CD8-positive, alpha-beta memory T cell (primary cell): ENCODE measurements at regions of chr17 and their contacts with region 1.

Region 1: GRCh38 chr17:49567871-49568694 is 7.6 kb upstream of the NXPH3 start:
- DNase-seq: peak; percentile 69 to 84 (median 75)
- H3K4me3 ChIP-seq: peak overlapping the region; percentile 59
- H3K4me3 Mint-ChIP-seq: peak overlapping the region; percentile 48 to 79 (median 66)
- H3K27ac ChIP-seq: no peak overlapping the region
- H3K27ac Mint-ChIP-seq: peak overlapping the region in 4 of 8 donors; percentile 11 to 50 (median 32)
- H3K4me1 ChIP-seq: peaks cover 16% of the 10 kb centered on the region
- H3K4me1 Mint-ChIP-seq: peaks cover 13 to 24% (median 17%) of the 10 kb centered on the region in 3 donors
- H3K27me3 ChIP-seq: no peaks in the 10 kb centered on the region
- H3K27me3 Mint-ChIP-seq: peaks cover 18 to 23% of the 10 kb centered on the region in 2 donors

Region 2: GRCh38 chr17:49580055-49580721 is 12.1 kb after region 1 on chr17:
- CTCF ChIA-PET with region 1: interaction called, 14 read pairs
- POLR2A ChIA-PET with region 1: no interaction called
- DNase-seq: no peak
- H3K4me3 ChIP-seq: no peak overlapping the region
- H3K4me3 Mint-ChIP-seq: no peak overlapping the region
- H3K27ac ChIP-seq: no peak overlapping the region
- H3K27ac Mint-ChIP-seq: no peak overlapping the region
- H3K4me1 ChIP-seq: peaks cover 9% of the 10 kb centered on the region
- H3K4me1 Mint-ChIP-seq: peaks cover 0 to 18% (median 7%) of the 10 kb centered on the region in 3 donors
- H3K27me3 ChIP-seq: peaks cover 14% of the 10 kb centered on the region
- H3K27me3 Mint-ChIP-seq: peaks cover 22 to 31% of the 10 kb centered on the region in 2 donors

Region 3: GRCh38 chr17:49694847-49695683 is 127.0 kb after region 1 on chr17:
- CTCF ChIA-PET with region 1: interaction called, 169 read pairs
- POLR2A ChIA-PET with region 1: interaction called, 5 read pairs
- DNase-seq: peak; percentile 50 to 78 (median 65)
- H3K4me3 ChIP-seq: no peak overlapping the region
- H3K4me3 Mint-ChIP-seq: peak overlapping the region in 6 of 7 donors; percentile 15 to 79 (median 50)
- H3K27ac ChIP-seq: no peak overlapping the region
- H3K27ac Mint-ChIP-seq: peak overlapping the region; percentile 79 to 96 (median 90)
- H3K4me1 ChIP-seq: peaks cover 24% of the 10 kb centered on the region
- H3K4me1 Mint-ChIP-seq: peaks cover 34 to 44% (median 34%) of the 10 kb centered on the region in 3 donors
- H3K27me3 ChIP-seq: no peaks in the 10 kb centered on the region
- H3K27me3 Mint-ChIP-seq: no peaks in the 10 kb centered on the region

Region 4: DNA sequence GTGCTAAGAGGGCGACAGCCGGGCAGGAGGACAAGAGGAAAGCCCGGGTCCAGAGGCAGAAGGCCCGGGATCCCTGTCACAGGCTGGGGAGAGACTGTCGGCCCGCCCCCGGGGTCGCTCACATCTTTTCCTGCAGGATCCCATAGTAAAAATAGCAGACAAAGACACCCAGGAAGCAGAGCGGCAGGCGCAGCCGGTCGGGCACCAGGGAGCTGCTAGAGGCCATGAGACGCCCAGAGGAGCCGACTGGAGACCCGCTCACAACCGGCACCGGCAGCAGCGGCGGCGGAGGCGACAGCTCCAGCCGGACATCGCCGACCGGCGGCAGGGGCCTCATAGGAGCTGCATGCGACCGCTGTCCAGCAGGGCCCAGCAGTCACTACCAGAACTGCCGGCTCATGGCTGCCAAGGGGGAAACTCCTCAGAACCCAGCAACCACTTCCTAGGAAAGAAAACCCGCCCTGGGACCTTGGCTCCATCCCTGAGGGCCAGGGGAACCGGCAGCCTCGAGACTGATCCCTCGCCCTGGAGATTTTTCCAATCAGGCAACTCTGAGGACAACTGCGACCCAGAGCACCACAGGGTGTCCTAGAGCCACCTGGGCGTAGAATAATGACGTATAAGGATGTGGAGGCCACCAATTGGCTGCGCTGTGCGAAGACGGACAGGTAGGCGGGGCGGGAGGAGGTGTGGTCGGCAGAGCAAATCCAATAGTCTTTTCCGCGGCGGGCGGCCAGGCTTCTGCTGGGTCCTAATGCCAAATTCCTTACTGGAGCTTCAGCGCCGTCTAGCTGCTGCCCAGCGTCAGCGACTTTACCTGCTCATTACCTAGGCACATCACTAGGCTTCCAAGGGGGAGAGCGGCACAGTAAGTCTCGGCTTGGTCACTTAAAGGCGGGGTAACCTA is 139.8 kb after region 1 on chr17 and contains the start of gene SLC35B1:
- CTCF ChIA-PET with region 1: interaction called, 38 read pairs
- POLR2A ChIA-PET with region 1: interaction called, 6 read pairs
- DNase-seq: peak; percentile 97 to 99 (median 98)
- H3K4me3 ChIP-seq: peak within 1 kb of the TSS; percentile 86
- H3K4me3 Mint-ChIP-seq: peak within 1 kb of the TSS; percentile 83 to 95 (median 92)
- H3K27ac ChIP-seq: peak within 1 kb of the TSS; percentile 96
- H3K27ac Mint-ChIP-seq: peak within 1 kb of the TSS; percentile 88 to 99 (median 98)
- H3K4me1 ChIP-seq: peaks cover 26% of the 10 kb centered on the region
- H3K4me1 Mint-ChIP-seq: peaks cover 42 to 58% (median 54%) of the 10 kb centered on the region in 3 donors
- H3K27me3 ChIP-seq: no peaks in the 10 kb centered on the region
- H3K27me3 Mint-ChIP-seq: peaks cover 0 to 2% of the 10 kb centered on the region in 2 donors
- total RNA-seq, gene SLC35B1: 82.8 to 88.9 TPM

Region 5: DNA sequence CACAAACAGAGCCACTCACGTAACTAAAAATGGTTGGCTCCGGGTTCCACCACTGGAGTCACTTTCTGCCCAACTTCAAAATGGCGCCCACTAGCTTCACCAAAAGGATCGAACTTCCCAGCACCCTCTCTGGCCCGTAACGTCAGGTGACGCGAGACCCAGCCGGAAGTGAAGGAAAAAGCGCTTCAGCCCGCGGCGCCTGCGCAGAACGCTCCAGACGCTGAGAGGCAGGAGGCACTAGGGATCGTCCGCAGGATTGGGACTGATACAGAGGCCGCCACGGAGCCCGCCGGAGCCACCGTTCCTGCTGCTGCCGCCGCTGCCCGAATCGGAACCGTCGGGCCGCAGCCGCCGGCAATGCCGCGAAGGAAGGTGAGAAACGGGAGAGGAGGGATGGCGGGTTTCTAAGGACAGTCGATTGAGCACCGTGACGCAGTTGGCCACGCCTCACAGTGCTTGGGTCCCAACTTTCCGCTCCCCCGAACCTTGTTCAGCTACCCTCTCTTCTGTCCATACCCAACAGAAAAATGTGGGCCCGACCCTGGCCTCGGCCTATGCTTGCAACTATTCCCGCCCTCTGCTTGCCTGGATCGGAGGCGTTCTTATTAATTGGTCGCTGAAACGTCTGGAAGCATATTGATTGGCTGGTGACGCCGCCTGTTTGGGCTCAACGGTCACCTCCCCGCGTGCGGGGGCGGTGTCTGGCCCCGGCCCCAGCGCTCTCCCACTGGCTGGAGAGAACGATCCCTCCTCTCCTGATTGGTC is 220.6 kb after region 1 on chr17 and contains the start of gene KAT7:
- CTCF ChIA-PET with region 1: interaction called, 18 read pairs
- POLR2A ChIA-PET with region 1: no interaction called
- DNase-seq: peak; percentile 97 to 99 (median 99)
- H3K4me3 ChIP-seq: peak within 1 kb of the TSS; percentile 93
- H3K4me3 Mint-ChIP-seq: peak within 1 kb of the TSS; percentile 91 to 100 (median 96)
- H3K27ac ChIP-seq: peak within 1 kb of the TSS; percentile 98
- H3K27ac Mint-ChIP-seq: peak within 1 kb of the TSS; percentile 90 to 100 (median 98)
- H3K4me1 ChIP-seq: peaks cover 33% of the 10 kb centered on the region
- H3K4me1 Mint-ChIP-seq: peaks cover 50 to 60% (median 59%) of the 10 kb centered on the region in 3 donors
- H3K27me3 ChIP-seq: no peaks in the 10 kb centered on the region
- H3K27me3 Mint-ChIP-seq: no peaks in the 10 kb centered on the region
- total RNA-seq, gene KAT7: 66.1 to 75.8 TPM